SK-N-SH (cell line): ENCODE measurements at regions of chr1 and their contacts with region 1.

Region 1: DNA sequence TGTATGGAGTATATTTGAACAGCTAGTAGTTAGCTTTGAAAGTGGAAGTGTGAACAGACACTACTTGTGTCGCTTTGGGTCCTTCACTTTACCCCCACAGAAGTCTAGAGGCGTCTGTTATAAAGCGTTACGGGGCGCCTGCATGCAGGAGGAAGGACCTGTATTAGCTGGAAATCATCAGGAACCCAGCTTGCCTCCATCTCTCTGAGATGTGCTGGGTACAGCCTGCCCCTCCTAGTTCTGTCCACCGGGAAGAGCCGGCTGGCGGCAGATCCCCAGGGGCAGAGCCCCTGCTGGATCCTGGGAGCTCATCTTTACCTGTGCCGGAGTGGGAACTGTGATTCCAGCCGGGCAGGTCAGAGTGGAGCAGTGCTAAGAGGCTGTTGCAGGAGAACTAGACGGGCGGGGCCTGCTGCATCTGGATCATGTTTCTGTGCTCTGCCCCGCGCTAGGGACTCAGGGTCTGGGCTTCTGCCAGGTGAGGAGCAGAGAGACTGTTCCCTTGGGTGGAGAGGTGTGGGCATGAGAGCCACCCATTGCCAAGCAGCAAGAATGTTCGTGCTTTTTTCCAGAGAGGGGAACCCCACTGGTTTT is 22.3 kb upstream of the SPSB1 start:
- DNase-seq: no peak
- H3K4me3 ChIP-seq: no peak overlapping the region
- H3K27ac ChIP-seq: no peak overlapping the region
- H3K4me1 ChIP-seq: peaks cover 5 to 6% of the 10 kb centered on the region in 2 experiments; a peak in 2 of 4 replicates
- H3K27me3 ChIP-seq: no peaks in the 10 kb centered on the region
- CTCF ChIP-seq: no peak
- EP300 ChIP-seq: no peak
- RAD21 ChIP-seq: no peak

Region 2: DNA sequence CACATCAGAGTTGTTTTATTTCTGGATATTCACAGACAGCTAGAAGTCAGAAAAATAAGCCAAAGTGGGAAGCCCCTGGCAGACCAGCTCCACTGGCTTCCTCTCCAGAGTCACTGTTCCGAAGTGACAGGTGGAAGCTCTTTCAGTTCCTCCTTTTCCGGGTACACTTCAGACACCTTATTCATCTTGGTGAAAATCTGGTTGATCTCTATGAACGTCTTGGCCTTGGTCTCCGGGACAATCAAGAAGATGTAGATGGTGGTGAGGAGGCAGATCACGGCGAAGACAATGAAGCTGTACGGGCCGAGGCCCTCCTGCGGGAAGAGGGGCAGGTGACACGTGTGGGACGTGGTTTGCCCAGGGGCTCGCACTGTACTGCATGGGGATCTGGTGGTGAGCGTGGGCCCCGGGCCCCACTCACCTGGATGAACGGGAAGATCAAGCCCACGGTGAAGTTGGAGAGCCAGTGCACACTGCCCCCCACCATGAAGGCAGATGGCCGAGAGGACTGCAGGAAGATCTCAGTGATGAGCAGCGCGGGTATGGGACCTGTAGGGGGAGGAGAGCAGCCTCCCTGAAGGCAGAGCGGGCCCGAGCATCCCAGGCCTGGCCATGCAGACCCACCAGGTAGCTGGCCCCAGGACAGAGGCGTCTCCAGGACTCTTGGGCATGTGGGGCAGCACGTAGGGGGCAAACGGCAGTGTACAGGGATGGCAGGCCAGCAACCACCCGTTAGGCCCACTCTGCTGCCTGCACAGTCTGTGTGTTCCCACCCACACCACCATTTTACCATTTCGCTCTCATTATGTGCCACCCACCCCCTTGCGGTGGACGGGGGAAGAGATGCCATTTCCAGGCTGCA is 232.7 kb before region 1 on chr1:
- CTCF ChIA-PET with region 1: no interaction called
- POLR2A ChIA-PET with region 1: no interaction called
- DNase-seq: no peak
- H3K4me3 ChIP-seq: no peak overlapping the region
- H3K27ac ChIP-seq: no peak overlapping the region
- H3K4me1 ChIP-seq: no peaks in the 10 kb centered on the region
- H3K27me3 ChIP-seq: no peaks in the 10 kb centered on the region
- CTCF ChIP-seq: no peak
- EP300 ChIP-seq: no peak
- RAD21 ChIP-seq: no peak

Region 3: GRCh38 chr1:9052272-9053049 is 217.9 kb before region 1 on chr1:
- CTCF ChIA-PET with region 1: no interaction called
- POLR2A ChIA-PET with region 1: no interaction called
- DNase-seq: no peak
- H3K4me3 ChIP-seq: no peak overlapping the region
- H3K27ac ChIP-seq: no peak overlapping the region
- H3K4me1 ChIP-seq: no peaks in the 10 kb centered on the region
- H3K27me3 ChIP-seq: no peaks in the 10 kb centered on the region
- CTCF ChIP-seq: no peak
- EP300 ChIP-seq: no peak
- RAD21 ChIP-seq: no peak

Region 4: DNA sequence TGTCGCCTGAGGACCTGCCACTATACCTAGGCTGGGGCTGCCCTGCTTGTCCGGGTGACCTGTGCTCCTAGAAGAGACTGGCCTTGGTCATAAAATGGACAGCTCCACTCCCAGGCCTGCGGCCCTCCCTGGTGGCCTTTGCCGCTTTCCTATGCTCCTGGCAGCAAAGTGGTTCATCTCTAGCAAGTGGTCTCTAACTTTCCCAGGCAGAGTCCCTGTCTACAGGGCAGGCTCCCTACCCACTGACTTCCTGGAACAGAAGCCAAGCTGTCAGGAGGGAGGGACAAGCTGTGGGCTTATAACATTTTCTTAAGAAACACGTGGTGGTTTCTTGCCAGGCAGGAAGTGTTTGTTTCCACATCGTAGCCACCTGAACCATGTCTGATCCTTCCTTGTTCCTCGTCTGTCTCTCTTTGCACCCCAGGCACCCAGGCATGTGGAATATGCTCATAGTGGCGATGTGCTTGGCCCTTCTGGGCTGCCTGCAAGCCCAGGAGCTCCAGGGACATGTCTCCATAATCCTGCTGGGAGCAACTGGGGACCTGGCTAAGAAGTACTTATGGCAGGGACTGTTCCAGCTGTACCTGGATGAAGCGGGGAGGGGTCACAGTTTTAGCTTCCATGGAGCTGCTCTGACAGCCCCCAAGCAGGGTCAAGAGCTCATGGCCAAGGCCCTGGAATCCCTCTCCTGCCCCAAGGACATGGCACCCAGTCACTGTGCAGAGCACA is 25.7 kb before region 1 on chr1:
- CTCF ChIA-PET with region 1: interaction called, 15 read pairs
- POLR2A ChIA-PET with region 1: no interaction called
- DNase-seq: no peak
- H3K4me3 ChIP-seq: no peak overlapping the region
- H3K27ac ChIP-seq: no peak overlapping the region
- H3K4me1 ChIP-seq: peaks cover 0 to under 1% of the 10 kb centered on the region in 2 experiments; a peak in 1 of 4 replicates
- H3K27me3 ChIP-seq: no peaks in the 10 kb centered on the region
- CTCF ChIP-seq: no peak
- EP300 ChIP-seq: no peak
- RAD21 ChIP-seq: no peak

Region 5: DNA sequence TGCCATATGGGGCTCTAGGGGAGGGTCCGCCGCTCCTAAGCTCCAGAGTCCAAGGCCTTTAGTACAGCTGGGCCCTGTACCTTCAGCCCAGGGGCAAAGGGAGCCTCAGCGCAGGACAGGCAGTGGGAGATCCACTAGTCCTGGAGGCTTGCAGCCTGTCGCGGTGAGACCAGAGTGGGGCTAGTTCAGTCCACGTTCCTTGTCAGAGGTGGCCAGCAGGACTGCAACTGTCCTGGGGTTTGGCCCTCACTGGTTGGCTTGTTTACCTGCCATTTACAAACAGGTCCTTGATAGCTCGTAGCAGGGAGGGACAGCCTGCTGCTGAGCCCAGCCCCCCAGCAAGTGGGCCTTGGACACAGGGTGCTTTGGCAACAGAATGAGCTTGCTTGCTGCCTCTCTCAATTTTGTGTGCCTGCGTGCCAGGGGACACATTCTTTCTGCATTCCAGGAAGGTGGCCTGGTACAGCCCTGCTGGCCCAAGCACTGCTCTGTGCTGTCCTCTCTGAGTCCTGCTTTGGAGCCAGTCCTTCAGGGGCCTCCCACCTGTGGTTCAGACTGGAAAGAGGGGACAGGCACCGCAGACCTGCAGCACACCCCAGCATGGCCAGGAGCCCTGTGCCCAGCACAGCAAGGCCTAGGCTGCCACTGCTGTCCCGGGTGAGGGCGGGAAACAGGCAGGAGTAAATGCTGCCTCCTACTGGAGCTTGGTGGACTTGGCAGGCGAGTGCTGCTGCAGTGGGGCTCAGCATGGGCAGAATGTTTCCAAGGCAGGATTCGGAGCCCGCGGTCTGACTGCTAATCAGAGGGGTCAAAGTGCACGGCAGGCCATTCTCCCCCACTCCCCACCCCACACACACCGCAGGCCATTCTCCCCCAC is 20.6 kb before region 1 on chr1:
- CTCF ChIA-PET with region 1: interaction called, 22 read pairs
- POLR2A ChIA-PET with region 1: no interaction called
- DNase-seq: peak; percentile 76
- H3K4me3 ChIP-seq: no peak overlapping the region
- H3K27ac ChIP-seq: no peak overlapping the region
- H3K4me1 ChIP-seq: peaks cover 7 to 37% of the 10 kb centered on the region in 2 experiments; a peak in 3 of 4 replicates
- H3K27me3 ChIP-seq: no peaks in the 10 kb centered on the region
- CTCF ChIP-seq: peak; percentile 55
- EP300 ChIP-seq: no peak
- RAD21 ChIP-seq: peak; percentile 46

Region 6: DNA sequence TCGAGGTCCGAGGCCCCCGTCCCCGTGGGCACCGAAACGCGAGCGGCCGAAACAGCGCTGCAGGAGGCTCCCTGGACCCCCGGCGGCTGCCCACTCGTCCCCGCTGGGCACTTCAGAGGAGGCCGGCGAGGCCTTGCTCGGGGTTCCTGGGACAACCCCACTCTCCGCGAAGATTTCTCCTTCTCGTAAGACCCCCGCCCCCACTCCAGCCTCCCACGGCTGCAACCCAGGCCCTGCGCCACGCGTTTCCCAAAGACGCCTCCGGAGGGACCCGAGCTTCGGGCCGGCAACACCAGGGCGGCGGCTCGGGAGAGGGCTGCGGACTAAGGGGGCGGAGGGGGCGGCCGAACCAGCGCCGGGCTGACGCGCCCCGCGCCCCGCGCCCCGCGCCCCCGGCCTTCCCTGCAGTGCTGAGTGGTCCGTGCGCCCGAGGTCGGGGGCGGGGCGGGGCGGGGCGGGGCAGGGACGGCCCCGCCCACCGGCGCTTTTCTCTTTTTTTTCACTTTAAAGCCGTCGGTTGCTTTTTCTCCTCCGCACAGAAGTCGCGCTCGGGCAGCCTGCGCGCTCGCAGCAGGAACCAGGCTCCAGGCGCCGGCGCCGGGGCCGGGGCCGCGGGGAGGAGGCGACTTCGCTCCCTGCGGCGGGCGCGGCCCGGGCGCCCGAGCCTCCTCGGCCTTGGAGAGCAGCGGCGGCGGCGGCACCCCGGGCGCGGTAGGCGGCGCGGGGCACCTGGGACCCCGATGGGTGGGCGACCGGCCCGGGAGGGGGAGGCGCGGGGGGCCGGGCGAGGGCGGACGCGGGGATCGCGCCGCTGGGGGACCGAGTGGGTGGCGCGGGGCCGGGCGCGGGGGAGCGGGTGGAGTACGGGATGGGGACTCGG is 22.2 kb after region 1 on chr1 and contains the start of gene SPSB1:
- CTCF ChIA-PET with region 1: interaction called, 12 read pairs
- POLR2A ChIA-PET with region 1: no interaction called
- DNase-seq: peak; percentile 88
- H3K4me3 ChIP-seq: peak within 1 kb of the TSS; percentile 48 to 81
- H3K27ac ChIP-seq: peak within 1 kb of the TSS; percentile 9 to 49; a peak in 1 of 4 replicates
- H3K4me1 ChIP-seq: peaks cover 7 to 15% of the 10 kb centered on the region in 2 experiments; a peak in 1 of 4 replicates
- H3K27me3 ChIP-seq: no peaks in the 10 kb centered on the region
- CTCF ChIP-seq: no peak
- EP300 ChIP-seq: no peak
- RAD21 ChIP-seq: no peak
- polyA plus RNA-seq, gene SPSB1: 8.4 and 9.2 TPM in 2 replicates

Region 7: DNA sequence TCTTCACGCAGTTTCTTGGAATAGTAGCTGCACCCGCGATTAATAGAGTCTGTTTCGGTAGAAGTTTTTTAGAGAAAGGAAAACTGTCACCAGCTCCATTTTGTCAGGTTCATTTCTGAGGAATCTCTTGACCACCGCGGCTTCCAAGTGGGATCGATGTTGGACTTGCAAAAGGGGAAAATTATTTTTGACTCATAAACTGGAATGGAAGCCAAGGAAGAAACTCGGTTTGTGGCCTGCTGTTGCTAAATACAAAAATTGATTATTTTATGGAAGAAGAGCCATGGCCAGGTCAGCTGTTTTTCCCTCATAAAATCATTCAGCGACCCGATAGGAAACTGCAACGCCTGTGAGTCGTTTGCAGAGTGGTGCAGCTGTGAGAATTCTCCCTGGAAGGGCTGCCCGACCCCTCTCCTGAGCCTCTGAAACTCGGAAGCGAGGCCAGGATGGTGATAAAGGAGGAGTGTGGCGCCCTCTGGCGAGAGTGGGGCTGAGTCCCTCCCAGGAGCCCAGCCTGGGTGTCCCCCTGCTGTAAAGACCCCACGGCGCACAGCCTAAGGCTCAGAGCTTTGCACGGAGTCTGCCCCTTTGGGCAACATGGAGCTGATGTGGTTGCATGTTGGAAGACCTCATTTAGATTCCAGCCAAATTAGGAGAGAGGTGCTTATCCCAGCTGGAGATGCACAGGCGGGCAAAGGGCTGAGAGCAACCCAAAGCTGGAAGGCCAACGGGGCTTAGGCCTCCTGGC is 185.3 kb after region 1 on chr1:
- CTCF ChIA-PET with region 1: interaction called, 66 read pairs
- POLR2A ChIA-PET with region 1: no interaction called
- DNase-seq: peak; percentile 79
- H3K4me3 ChIP-seq: peak overlapping the region in 1 of 2 experiments; percentile 41; a peak in 1 of 4 replicates
- H3K27ac ChIP-seq: no peak overlapping the region
- H3K4me1 ChIP-seq: peaks cover 0 to 5% of the 10 kb centered on the region in 2 experiments; a peak in 1 of 4 replicates
- H3K27me3 ChIP-seq: no peaks in the 10 kb centered on the region
- CTCF ChIP-seq: peak; percentile 64
- EP300 ChIP-seq: no peak
- RAD21 ChIP-seq: peak; percentile 79